ENCODE measurements at regions of chr4 and their contacts with region 1.

Region 1: GRCh38 chr4:4519297-4519894 is 22.5 kb downstream of the STX18 start:
- DNase-seq: no peak
- ATAC-seq: no peak
- H3K4me3 Mint-ChIP-seq: no peak overlapping the region
- H3K27ac Mint-ChIP-seq: no peak overlapping the region
- H3K4me1 Mint-ChIP-seq: peaks cover 28% of the 10 kb centered on the region
- H3K27me3 Mint-ChIP-seq: no peaks in the 10 kb centered on the region

Region 2: DNA sequence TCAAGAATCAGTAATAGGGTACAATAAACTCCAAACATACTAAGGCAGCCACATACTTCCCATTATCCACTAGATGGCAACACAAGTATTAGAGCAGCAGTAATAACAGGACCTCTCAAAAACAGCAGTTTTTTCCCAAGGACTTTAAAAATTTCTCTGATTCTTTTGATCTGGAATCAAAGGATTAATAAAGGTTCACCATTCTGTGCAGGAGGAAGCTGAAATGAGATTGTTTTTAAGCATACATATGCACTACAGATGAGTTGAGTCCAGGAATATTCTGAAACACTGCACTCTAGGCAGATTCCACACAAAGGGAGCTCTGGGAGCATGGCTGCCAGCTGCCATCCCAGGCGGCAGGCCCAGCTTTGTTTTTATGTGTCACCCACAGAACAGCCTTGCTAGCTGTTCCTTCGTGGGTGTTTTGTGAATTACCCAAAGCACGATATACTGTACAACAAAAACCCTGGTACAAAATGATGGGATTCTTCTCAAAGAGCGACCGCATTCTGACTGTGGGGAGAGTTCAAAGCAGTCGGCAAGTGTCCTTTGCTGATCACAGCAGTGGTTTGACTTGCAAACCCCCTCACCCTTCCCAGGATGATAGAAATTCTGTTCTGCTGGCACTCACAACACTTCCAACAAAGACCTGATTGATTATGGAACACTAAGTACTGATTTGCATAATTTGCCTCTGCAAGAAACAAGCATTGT is 38.6 kb before region 1 on chr4:
- CTCF ChIA-PET with region 1: no interaction called
- POLR2A ChIA-PET with region 1: no interaction called
- intact Hi-C with region 1: no loop called
- DNase-seq: no peak
- ATAC-seq: no peak
- H3K4me3 Mint-ChIP-seq: no peak overlapping the region
- H3K27ac Mint-ChIP-seq: no peak overlapping the region
- H3K4me1 Mint-ChIP-seq: peaks cover 9% of the 10 kb centered on the region
- H3K27me3 Mint-ChIP-seq: no peaks in the 10 kb centered on the region

Region 3: DNA sequence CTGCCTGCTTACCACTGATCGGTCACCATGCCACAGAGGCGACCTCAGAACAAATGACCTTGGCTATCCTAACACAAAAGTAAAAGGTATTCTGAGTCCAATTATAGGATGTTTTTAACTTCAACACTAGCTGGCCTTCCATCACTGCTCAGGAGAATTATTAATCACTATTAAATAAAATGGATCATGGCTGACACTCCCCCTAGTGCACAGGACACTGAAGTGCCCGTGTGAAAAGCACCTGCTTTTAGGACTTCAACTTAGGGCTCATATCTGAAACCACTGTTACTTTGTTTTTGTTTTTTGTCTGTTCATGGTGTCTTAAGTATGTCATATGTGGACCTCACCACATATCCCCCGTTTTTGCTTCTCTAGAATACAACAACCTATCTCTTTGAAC is 11.5 kb before region 1 on chr4:
- CTCF ChIA-PET with region 1: interaction called, 5 read pairs
- POLR2A ChIA-PET with region 1: interaction called, 13 read pairs
- intact Hi-C with region 1: no loop called
- DNase-seq: no peak
- ATAC-seq: no peak
- H3K4me3 Mint-ChIP-seq: no peak overlapping the region
- H3K27ac Mint-ChIP-seq: no peak overlapping the region
- H3K4me1 Mint-ChIP-seq: peaks cover 12% of the 10 kb centered on the region
- H3K27me3 Mint-ChIP-seq: no peaks in the 10 kb centered on the region

Region 4: DNA sequence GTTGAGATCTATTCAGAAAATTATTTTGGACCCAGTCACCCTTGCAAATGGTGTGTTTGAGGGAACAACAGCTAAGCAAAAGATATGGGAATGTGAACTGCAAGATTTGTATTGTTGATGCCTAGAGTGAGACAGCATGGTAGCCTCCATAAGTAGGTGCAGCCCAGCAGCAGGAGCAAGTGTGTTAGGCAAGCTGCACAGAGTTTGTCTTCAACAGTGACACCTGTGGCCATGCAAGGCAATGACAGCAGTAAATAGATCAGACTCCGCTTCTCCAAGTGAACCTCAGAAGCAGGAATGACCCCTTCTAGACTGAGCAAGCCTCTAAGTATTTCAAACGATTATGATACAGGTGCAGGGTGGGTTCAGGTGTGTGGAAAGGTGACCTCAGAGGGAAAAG is 206.7 kb after region 1 on chr4:
- CTCF ChIA-PET with region 1: no interaction called
- POLR2A ChIA-PET with region 1: no interaction called
- intact Hi-C with region 1: no loop called
- DNase-seq: no peak
- ATAC-seq: no peak
- H3K4me3 Mint-ChIP-seq: no peak overlapping the region
- H3K27ac Mint-ChIP-seq: no peak overlapping the region
- H3K4me1 Mint-ChIP-seq: no peaks in the 10 kb centered on the region
- H3K27me3 Mint-ChIP-seq: no peaks in the 10 kb centered on the region

Region 5: DNA sequence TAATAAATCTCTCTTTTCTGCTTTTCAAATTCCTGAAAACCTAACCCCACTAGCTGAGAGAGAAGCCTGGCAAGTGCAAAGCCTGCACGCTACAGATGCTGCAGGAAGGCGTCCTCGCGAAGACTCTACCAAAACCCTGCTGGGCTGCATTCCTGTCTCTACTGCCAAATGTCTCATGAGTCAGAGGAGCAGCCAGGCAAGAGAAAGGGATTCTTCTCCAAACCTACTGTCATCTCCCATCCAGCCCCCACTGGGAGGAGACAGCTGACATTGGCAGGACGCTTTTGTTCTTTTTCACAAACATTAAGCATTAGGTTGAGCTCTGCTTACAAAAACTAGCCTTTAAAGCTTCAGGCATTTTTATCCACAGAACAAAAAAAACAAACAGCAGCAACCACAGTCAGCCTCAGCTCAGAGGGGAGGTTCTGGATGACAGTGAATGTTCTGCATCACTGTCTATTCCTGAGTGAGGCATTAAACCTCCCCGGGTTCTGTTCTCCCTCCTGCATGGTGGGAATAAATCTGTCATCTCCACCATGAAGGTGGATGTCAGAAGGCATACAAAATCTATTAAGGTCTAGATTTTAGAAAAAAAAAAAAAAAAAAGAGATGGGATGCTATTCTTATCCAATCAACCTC is 1355.5 kb after region 1 on chr4:
- CTCF ChIA-PET with region 1: no interaction called
- POLR2A ChIA-PET with region 1: no interaction called
- intact Hi-C with region 1: no loop called
- DNase-seq: no peak
- ATAC-seq: no peak
- H3K4me3 Mint-ChIP-seq: no peak overlapping the region
- H3K27ac Mint-ChIP-seq: no peak overlapping the region
- H3K4me1 Mint-ChIP-seq: no peaks in the 10 kb centered on the region
- H3K27me3 Mint-ChIP-seq: peaks cover 12% of the 10 kb centered on the region